Activated CD4-positive, alpha-beta memory T cell treated with anti-CD3 and anti-CD28 coated beads for 36 hours (primary cell): ENCODE measurements at regions of chr22 and their contacts with region 1.

Region 1: GRCh38 chr22:41940832-41941765 is 5.9 kb downstream of the CENPM start:
- DNase-seq: peak; percentile 91
- H3K4me3 Mint-ChIP-seq: peak overlapping the region; percentile 80
- H3K27ac Mint-ChIP-seq: peak overlapping the region; percentile 99
- H3K4me1 Mint-ChIP-seq: peaks cover 67% of the 10 kb centered on the region
- H3K27me3 Mint-ChIP-seq: no peaks in the 10 kb centered on the region

Region 2: GRCh38 chr22:41621099-41621910 is 319.8 kb before region 1 on chr22 and contains the start of gene XRCC6:
- CTCF ChIA-PET with region 1: no interaction called
- POLR2A ChIA-PET with region 1: no interaction called
- intact Hi-C with region 1: loop called (anchors 1 kb)
- DNase-seq: peak; percentile 100
- H3K4me3 Mint-ChIP-seq: peak within 1 kb of the TSS; percentile 97
- H3K27ac Mint-ChIP-seq: peak within 1 kb of the TSS; percentile 98
- H3K4me1 Mint-ChIP-seq: peaks cover 40% of the 10 kb centered on the region
- H3K27me3 Mint-ChIP-seq: no peaks in the 10 kb centered on the region
- total RNA-seq, gene XRCC6: 403 to 409 TPM

Region 3: GRCh38 chr22:41648432-41648831 is 292.7 kb before region 1 on chr22:
- CTCF ChIA-PET with region 1: no interaction called
- POLR2A ChIA-PET with region 1: no interaction called
- intact Hi-C with region 1: no loop called
- DNase-seq: no peak
- H3K4me3 Mint-ChIP-seq: no peak overlapping the region
- H3K27ac Mint-ChIP-seq: no peak overlapping the region
- H3K4me1 Mint-ChIP-seq: peaks cover 7% of the 10 kb centered on the region
- H3K27me3 Mint-ChIP-seq: no peaks in the 10 kb centered on the region

Region 4: DNA sequence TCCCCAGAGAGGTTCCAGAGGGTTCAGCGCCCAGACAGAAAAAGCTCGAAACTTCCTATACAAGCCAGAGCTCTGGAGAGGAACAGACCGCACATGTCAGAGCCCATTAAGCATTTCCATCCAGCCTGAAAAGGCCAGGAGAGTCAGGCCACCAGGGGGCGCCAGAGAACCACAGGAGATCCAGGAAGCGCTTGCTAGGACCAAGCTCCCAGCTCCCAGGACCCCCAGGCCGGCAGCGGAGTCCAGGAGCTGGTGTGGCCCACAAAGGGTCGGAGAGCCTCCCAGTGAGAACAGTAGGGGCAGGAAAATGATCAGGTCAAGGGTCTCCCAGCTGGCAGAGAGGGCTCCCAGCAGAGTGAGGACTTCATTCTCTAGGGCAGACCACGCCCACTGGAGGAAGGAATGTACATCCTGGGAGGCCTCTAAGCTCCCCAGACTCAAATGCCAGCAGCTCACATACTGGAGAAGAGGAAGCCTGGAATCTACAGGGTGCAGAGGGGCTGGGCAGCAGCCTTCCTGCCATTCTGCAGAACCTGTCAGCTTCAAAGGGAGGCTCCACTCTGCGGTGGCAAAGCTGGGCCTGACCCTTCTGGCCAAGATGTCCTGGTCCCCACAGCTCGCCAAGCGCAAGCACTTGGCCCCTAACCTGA is 243.8 kb before region 1 on chr22:
- CTCF ChIA-PET with region 1: interaction called, 60 read pairs
- POLR2A ChIA-PET with region 1: interaction called, 12 read pairs
- intact Hi-C with region 1: loop called (anchors 1 kb)
- DNase-seq: peak; percentile 94
- H3K4me3 Mint-ChIP-seq: no peak overlapping the region
- H3K27ac Mint-ChIP-seq: peak overlapping the region; percentile 46
- H3K4me1 Mint-ChIP-seq: peaks cover 11% of the 10 kb centered on the region
- H3K27me3 Mint-ChIP-seq: no peaks in the 10 kb centered on the region

Region 5: GRCh38 chr22:41800348-41801146 is 140.6 kb before region 1 on chr22 and contains the start of gene CCDC134:
- CTCF ChIA-PET with region 1: interaction called, 17 read pairs
- POLR2A ChIA-PET with region 1: interaction called, 22 read pairs
- intact Hi-C with region 1: no loop called
- DNase-seq: peak; percentile 95
- H3K4me3 Mint-ChIP-seq: peak within 1 kb of the TSS; percentile 98
- H3K27ac Mint-ChIP-seq: peak within 1 kb of the TSS; percentile 95
- H3K4me1 Mint-ChIP-seq: peaks cover 35% of the 10 kb centered on the region
- H3K27me3 Mint-ChIP-seq: no peaks in the 10 kb centered on the region
- total RNA-seq, gene CCDC134: 16.1 to 17.6 TPM

Region 6: DNA sequence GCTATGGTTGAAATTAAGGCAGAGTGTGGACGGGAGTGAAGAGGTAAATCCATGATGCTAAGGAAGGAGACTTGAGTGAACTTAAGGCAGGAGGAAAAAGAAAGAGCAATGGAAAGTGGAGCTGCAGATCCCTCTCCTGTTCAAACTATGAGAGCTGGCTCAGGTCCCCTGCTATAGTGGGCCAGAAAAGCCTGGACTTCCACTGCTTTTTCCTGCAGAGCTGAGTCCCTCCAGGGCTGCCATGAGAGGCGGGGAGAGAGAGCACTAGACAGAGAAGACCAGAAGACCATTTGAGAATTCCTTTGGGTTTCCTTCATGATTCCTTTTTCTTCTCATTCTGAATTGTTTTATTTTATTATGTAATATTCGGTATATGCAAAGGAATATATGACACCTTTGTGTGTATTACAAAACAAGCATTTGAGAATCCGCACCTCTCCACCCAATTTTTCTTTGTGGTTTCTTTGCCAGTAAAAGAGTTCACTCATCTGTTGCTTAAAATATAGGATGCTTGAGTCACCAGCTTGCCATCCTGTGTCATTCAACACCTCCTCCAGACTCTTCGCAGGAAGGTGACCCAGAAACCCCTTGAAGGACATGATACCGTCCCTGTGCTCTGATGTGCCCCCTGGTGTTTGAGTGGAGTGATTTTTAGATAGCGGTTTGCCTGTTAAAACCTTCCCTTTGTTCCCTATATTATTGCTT is 83.8 kb before region 1 on chr22:
- CTCF ChIA-PET with region 1: interaction called, 24 read pairs
- POLR2A ChIA-PET with region 1: interaction called, 28 read pairs
- intact Hi-C with region 1: loop called (anchors 1 kb)
- DNase-seq: peak; percentile 89
- H3K4me3 Mint-ChIP-seq: peak overlapping the region; percentile 28
- H3K27ac Mint-ChIP-seq: peak overlapping the region; percentile 95
- H3K4me1 Mint-ChIP-seq: peaks cover 80% of the 10 kb centered on the region
- H3K27me3 Mint-ChIP-seq: no peaks in the 10 kb centered on the region

Region 7: GRCh38 chr22:41925655-41926460 is 15.2 kb before region 1 on chr22:
- CTCF ChIA-PET with region 1: interaction called, 48 read pairs
- POLR2A ChIA-PET with region 1: interaction called, 26 read pairs
- intact Hi-C with region 1: loop called (anchors 2 kb)
- DNase-seq: peak; percentile 86
- H3K4me3 Mint-ChIP-seq: peak overlapping the region; percentile 71
- H3K27ac Mint-ChIP-seq: no peak overlapping the region
- H3K4me1 Mint-ChIP-seq: peaks cover 31% of the 10 kb centered on the region
- H3K27me3 Mint-ChIP-seq: peaks cover 6% of the 10 kb centered on the region

Region 8: DNA sequence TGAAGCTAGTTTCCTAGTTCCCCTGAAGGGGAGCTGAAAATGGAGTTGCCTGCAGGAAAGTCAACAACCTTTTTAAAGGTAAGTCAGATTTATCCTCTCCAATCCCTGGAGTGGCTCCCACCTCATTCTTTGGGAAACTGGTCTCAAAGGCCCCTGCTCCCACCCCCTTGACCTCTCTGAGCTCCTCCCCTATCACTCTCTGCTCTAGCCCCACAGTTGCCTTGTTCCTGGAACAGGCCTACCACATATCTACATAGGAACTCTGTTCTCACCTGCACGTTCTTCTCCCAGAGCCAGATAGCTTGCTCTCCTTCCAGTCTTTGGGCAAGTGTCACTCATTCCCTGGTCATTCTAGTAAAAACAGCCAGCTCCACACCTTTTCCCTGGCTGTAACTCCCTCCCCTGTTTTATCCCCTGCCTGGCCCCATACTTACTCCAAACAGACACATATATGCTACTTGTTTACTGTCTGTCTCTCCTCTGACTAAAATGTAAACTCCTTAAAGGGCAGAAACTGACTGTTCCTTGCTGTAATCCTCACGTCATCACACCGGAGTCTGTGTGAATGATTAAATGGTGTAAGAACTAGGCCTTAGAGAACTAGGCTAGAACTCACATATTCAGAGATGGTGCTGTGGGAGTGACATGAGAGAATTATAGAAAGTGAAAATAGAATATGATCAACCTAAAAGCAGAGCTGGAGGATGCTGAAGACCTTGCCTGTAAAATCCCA is 276.1 kb after region 1 on chr22:
- CTCF ChIA-PET with region 1: no interaction called
- POLR2A ChIA-PET with region 1: no interaction called
- intact Hi-C with region 1: loop called (anchors 1 kb)
- DNase-seq: peak; percentile 60
- H3K4me3 Mint-ChIP-seq: peak overlapping the region; percentile 38
- H3K27ac Mint-ChIP-seq: peak overlapping the region; percentile 95
- H3K4me1 Mint-ChIP-seq: peaks cover 45% of the 10 kb centered on the region
- H3K27me3 Mint-ChIP-seq: no peaks in the 10 kb centered on the region

Region 9: DNA sequence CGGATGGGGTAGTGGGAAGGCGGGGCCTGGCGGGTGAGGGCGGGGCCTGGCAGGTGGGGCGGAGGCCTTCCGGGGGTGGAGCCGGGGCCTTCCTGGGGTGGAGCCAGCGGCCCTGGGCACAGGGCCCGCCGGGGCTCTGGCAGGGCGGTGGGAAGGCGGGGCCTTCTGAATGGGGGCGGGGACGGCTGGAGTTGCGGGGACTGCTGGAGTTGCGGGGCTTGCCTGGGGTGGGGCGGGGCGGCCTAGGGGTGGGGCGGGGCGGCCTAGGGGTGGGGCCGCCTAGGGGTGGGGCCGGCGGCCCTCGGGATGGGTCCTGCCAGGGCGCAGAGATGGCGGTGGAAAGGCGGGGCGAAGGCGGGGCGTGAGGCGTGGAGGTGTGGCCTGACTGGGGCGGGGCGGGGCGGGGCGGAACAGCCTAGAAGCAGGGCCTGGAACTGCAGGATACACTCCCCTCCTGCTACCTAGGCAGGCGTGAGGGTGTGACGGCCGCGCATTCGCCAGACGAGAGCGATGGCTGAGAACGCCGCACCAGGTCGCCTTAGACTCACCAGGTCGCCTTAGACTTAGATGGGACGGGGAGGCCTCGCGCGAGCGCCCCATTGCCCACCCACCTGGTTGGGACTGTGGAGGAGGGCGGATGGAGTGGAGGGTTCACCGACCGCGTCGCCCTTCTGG is 559.2 kb after region 1 on chr22:
- CTCF ChIA-PET with region 1: no interaction called
- POLR2A ChIA-PET with region 1: no interaction called
- intact Hi-C with region 1: no loop called
- DNase-seq: peak; percentile 93
- H3K4me3 Mint-ChIP-seq: peak overlapping the region; percentile 35
- H3K27ac Mint-ChIP-seq: no peak overlapping the region
- H3K4me1 Mint-ChIP-seq: peaks cover 15% of the 10 kb centered on the region
- H3K27me3 Mint-ChIP-seq: no peaks in the 10 kb centered on the region